Heart left ventricle (tissue), 16 donors: ENCODE measurements at regions of chr15 and their contacts with region 1.

Region 1: DNA sequence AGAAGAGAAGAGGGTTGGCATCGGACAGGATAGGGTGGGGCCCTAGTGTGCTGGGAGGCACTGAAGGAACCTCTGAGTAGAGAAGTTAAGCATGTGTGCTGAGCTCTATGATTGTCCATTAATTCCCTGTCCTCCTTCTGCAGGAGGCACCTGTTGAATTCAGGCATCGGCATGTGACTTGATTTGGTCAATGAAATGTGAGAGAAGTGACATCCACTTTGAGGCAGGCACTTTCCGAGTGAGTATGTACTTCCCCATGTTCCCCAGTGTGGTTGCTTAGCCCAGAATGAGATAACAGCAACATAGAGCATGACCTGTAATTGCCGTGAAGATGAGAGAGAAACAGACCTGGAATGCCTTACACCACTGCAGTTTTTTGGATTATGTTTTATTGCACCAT is 224.8 kb downstream of the RPLP1 start:
- DNase-seq: no peak
- ATAC-seq: no peak
- H3K4me3 ChIP-seq: no peak overlapping the region
- H3K27ac ChIP-seq: no peak overlapping the region
- H3K4me1 ChIP-seq: no peaks in the 10 kb centered on the region
- H3K27me3 ChIP-seq: peaks cover 0 to 22% (median 9%) of the 10 kb centered on the region in 9 donors
- CTCF ChIP-seq: no peak
- POLR2A ChIP-seq: no peak

Region 2: DNA sequence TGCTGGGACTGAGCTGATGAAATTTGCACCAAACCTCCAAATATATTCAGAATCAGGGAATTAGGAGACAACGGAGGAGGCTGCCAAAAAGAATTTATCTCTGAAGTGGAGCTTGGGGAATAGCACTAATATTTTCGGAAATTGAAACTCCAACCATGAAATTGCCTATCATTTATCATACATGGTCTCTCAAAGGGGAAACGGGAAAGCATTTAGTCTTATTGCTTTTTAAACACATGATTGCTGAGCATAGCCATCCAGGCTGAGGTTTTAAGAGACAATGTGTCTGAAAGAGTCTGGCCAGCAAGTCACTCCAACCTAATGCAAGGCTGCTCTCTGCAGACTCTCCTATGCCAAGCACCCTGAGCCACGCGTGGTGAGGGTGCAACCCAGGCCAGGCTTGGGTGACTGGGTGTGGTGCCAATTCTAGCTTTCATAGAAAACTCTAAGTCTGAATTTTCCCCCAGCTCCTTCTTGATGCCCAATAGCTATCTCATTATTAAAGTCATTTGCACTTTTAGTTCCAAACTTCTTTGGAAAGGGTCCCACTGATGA is 24.6 kb before region 1 on chr15:
- intact Hi-C with region 1: loop called in 1 of 10 experiments (anchors 2 kb)
- DNase-seq: no peak
- ATAC-seq: peak in 1 of 4 donors; percentile 62
- H3K4me3 ChIP-seq: no peak overlapping the region
- H3K27ac ChIP-seq: no peak overlapping the region
- H3K4me1 ChIP-seq: peaks cover 0 to 5% (median 0%) of the 10 kb centered on the region in 12 donors
- H3K27me3 ChIP-seq: peaks cover 0 to 63% (median 4%) of the 10 kb centered on the region in 9 donors
- CTCF ChIP-seq: peak in 5 of 12 donors; percentile 10 to 32 (median 19)
- POLR2A ChIP-seq: no peak